ENCODE measurements at regions of chr6 and their contacts with region 1.

Region 1: GRCh38 chr6:53273370-53273769 is 75.4 kb downstream of the ELOVL5 start:
- DNase-seq: no peak
- H3K4me3 ChIP-seq: no peak overlapping the region
- H3K27ac ChIP-seq: no peak overlapping the region
- H3K4me1 ChIP-seq: peaks cover 0 to 9% (median 4%) of the 10 kb centered on the region in 4 donors
- H3K27me3 ChIP-seq: no peaks in the 10 kb centered on the region
- CTCF ChIP-seq: no peak
- EP300 ChIP-seq: no peak
- POLR2A ChIP-seq: no peak

Region 2: DNA sequence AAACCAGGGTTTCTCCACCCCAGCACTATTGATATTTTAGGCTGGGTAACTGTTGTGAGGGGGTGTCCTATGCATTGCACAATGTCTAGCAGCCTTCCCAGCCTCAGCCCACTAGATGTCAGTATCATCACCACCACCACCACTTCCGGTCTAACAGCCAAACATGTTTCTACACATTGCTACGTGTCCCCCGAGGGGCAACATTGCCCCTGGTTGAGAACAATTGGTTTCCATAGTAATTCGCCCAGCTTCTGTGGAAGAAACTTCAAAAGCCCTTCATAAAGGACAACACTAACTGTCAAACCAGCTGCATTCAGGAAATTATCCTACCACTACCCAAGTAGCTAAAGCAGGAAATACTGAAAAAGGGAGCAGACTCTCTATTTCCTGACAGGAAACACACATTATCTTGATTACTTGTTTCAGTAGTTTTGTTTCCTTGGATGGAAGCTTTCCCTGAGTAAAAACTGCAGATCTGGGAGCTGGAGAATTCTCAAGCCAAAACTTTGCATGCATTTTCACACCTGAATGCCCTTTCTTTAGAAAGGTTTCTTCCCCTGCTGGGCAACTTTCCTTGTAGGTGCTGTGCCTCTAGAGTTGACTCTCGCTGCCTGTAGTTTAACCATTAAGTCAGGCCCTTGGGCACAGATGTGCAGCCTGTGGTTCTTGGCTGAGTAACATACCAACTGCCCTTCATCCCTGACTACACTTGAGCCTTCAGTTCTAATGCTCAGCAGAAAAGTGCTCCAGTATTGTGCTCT is 1209.6 kb before region 1 on chr6:
- intact Hi-C with region 1: no loop called
- DNase-seq: no peak
- H3K4me3 ChIP-seq: peak overlapping the region in 1 of 4 donors; percentile 29
- H3K27ac ChIP-seq: no peak overlapping the region
- H3K4me1 ChIP-seq: peaks cover 0 to 5% (median 0%) of the 10 kb centered on the region in 4 donors
- H3K27me3 ChIP-seq: no peaks in the 10 kb centered on the region
- CTCF ChIP-seq: peak; percentile 31 to 49 (median 43)
- EP300 ChIP-seq: no peak
- POLR2A ChIP-seq: no peak

Region 3: GRCh38 chr6:53179961-53180651 is 93.3 kb before region 1 on chr6:
- intact Hi-C with region 1: loop called (anchors 10 kb)
- DNase-seq: no peak
- H3K4me3 ChIP-seq: no peak overlapping the region
- H3K27ac ChIP-seq: no peak overlapping the region
- H3K4me1 ChIP-seq: peaks cover 0 to 7% (median 3%) of the 10 kb centered on the region in 4 donors
- H3K27me3 ChIP-seq: no peaks in the 10 kb centered on the region
- CTCF ChIP-seq: no peak
- EP300 ChIP-seq: no peak
- POLR2A ChIP-seq: no peak

Region 4: DNA sequence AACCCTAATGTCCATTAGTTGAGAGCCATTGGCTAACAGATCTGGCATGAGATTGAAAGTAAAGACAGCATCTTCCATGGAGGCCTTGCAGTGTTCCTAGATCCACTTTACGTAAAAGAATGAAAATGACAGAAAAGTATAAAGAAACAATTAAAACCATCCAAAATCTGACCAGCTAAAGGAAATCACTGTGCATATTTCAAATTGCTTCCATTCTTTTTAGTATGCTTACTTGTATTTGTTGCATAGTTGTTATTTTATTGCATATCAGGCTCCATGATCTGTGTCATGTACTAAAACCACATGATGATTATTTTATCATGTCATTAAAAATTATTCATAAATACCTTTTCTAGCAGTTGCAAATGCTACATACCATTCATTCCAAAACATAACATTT is 203.6 kb after region 1 on chr6:
- intact Hi-C with region 1: loop called (anchors 10 kb)
- DNase-seq: no peak
- H3K4me3 ChIP-seq: no peak overlapping the region
- H3K27ac ChIP-seq: no peak overlapping the region
- H3K4me1 ChIP-seq: no peaks in the 10 kb centered on the region
- H3K27me3 ChIP-seq: no peaks in the 10 kb centered on the region
- CTCF ChIP-seq: no peak
- EP300 ChIP-seq: no peak
- POLR2A ChIP-seq: no peak

Measured in esophagus muscularis mucosa (tissue), 4 donors.